ENCODE measurements at regions of chr7 and their contacts with region 1.

Region 1: DNA sequence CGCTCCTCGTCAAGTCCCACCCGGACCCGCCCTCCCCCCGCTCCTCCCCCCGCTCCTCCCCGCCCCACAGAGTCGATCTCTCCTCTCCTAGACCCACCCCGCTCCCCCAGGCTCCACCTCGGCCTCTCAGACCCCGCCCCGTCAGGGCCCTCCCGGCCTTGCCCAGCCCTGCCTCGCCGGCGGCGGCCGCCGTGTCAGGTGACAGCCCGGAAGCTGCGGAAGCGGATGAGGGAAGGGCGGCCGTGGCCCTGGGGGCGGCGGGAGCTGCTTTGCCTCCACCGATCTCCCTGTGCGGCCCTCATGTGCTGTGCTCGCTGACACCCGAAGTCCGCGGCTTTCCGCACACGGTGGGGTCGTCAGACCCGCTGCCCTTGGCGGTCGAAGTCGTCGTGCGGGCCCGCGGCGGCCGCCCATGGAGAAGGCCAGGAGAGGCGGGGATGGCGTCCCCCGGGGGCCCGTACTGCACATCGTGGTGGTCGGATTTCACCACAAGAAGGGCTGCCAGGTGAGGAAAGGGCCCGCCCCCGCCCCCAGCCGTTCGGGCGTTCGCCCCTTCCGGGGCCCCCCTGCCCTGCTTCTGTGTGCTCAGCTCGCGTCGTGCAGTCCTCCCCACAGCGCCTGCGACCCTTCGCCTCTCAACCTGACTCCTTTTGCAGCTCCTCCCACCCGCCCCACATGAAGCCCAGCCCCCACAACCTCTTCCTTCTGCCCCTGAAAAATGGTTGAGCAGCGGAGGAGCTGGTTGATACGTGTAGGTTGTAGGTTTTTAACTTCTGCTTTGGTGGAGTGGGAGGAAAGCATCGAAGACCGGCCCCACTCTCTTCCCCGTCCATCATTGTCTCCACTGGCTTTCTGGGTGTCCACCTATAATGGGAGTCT is at the start of gene AVL9:
- DNase-seq: peak; percentile 96
- H3K4me3 ChIP-seq: peak within 1 kb of the TSS; percentile 89 to 100 (median 100)
- H3K27ac ChIP-seq: peak within 1 kb of the TSS; percentile 82
- H3K4me1 ChIP-seq: peaks cover 13% of the 10 kb centered on the region
- H3K27me3 ChIP-seq: no peaks in the 10 kb centered on the region
- CTCF ChIP-seq: no peak
- POLR2A ChIP-seq: peak; percentile 97
- total RNA-seq, gene AVL9: 42.5 and 44.1 TPM in 2 replicates

Region 2: GRCh38 chr7:32536585-32536984 is 41.0 kb after region 1 on chr7:
- CTCF ChIA-PET with region 1: no interaction called
- POLR2A ChIA-PET with region 1: no interaction called
- dilution Hi-C with region 1: no loop called
- intact Hi-C with region 1: loop called (anchors 2 kb)
- DNase-seq: peak; percentile 89
- H3K4me3 ChIP-seq: no peak overlapping the region
- H3K27ac ChIP-seq: peak overlapping the region; percentile 41
- H3K4me1 ChIP-seq: peaks cover 9% of the 10 kb centered on the region
- H3K27me3 ChIP-seq: no peaks in the 10 kb centered on the region
- CTCF ChIP-seq: no peak
- POLR2A ChIP-seq: no peak

Region 3: DNA sequence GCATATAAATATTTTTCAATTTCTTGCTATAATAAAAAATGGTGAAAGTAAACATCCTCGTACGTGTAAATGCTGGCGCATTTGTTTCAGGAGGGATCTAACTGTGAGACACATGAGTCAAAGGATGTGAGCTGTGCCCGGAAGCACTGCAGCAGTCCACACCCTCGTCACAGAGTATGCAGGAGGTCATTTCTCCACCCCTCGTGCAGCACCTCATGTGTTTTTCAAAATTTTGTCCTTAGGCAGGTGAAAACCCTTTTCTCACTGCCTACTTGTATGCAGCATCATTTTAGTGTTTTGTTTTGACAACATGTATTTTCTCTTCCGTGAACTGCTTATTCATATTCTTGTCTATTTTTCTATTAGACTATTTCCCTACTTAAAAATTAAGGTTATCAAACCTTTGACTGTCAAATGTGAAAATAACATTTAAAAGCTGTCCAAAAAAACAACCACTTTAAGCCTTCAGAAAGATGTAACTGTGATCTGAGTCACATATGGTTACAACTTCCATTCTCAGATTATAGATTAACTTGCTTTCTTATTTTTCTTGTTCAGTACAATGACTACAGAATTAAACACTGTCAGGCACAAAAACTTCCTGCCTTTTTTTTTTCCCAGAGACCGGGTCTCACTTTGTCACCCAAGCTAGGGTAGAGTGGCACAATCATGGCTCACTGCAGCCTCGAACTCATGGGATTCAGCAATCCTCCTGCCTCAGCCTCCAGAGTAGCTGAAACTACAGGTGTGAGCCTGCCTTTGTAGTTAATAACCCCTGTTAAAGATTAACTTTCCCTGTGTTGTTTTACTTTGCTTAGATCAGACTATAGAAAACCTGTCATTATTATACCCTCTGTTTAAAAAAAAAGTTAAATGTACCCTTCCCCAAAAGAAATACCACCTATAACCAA is 162.8 kb after region 1 on chr7:
- CTCF ChIA-PET with region 1: interaction called, 3 read pairs
- POLR2A ChIA-PET with region 1: no interaction called
- dilution Hi-C with region 1: no loop called
- intact Hi-C with region 1: loop called (anchors 1 kb)
- DNase-seq: peak; percentile 55
- H3K4me3 ChIP-seq: peak overlapping the region in 1 of 3 experiments; percentile 11
- H3K27ac ChIP-seq: peak overlapping the region; percentile 23
- H3K4me1 ChIP-seq: peaks cover 11% of the 10 kb centered on the region
- H3K27me3 ChIP-seq: no peaks in the 10 kb centered on the region
- CTCF ChIP-seq: no peak
- POLR2A ChIP-seq: no peak

Region 4: GRCh38 chr7:32957326-32958045 is 461.9 kb after region 1 on chr7 and contains the start of gene FKBP9:
- CTCF ChIA-PET with region 1: no interaction called
- POLR2A ChIA-PET with region 1: no interaction called
- dilution Hi-C with region 1: no loop called
- intact Hi-C with region 1: loop called (anchors 5 kb)
- DNase-seq: peak; percentile 82
- H3K4me3 ChIP-seq: peak within 1 kb of the TSS; percentile 50 to 89 (median 73)
- H3K27ac ChIP-seq: peak within 1 kb of the TSS; percentile 78
- H3K4me1 ChIP-seq: peaks cover 10% of the 10 kb centered on the region
- H3K27me3 ChIP-seq: no peaks in the 10 kb centered on the region
- CTCF ChIP-seq: no peak
- POLR2A ChIP-seq: peak; percentile 92
- total RNA-seq, gene FKBP9: 112 and 124 TPM in 2 replicates

Measured in endothelial cell of umbilical vein (primary cell).